ENCODE measurements at regions of chr3 and their contacts with region 1.

Region 1: GRCh38 chr3:34683851-34684250 is 885.4 kb downstream of the PDCD6IP start:
- DNase-seq: peak; percentile 70
- ATAC-seq: no peak
- H3K4me3 Mint-ChIP-seq: no peak overlapping the region
- H3K27ac Mint-ChIP-seq: no peak overlapping the region
- H3K4me1 Mint-ChIP-seq: no peaks in the 10 kb centered on the region
- H3K27me3 Mint-ChIP-seq: no peaks in the 10 kb centered on the region

Region 2: GRCh38 chr3:34106879-34107278 is 577.0 kb before region 1 on chr3:
- CTCF ChIA-PET with region 1: interaction called, 4 read pairs
- POLR2A ChIA-PET with region 1: no interaction called
- intact Hi-C with region 1: loop called in 1 of 2 experiments (anchors 5 kb)
- DNase-seq: peak; percentile 43
- ATAC-seq: peak; percentile 64
- H3K4me3 Mint-ChIP-seq: no peak overlapping the region
- H3K27ac Mint-ChIP-seq: no peak overlapping the region
- H3K4me1 Mint-ChIP-seq: no peaks in the 10 kb centered on the region
- H3K27me3 Mint-ChIP-seq: peaks cover 5% of the 10 kb centered on the region

Region 3: GRCh38 chr3:34260271-34261006 is 423.4 kb before region 1 on chr3:
- CTCF ChIA-PET with region 1: interaction called, 12 read pairs
- POLR2A ChIA-PET with region 1: no interaction called
- intact Hi-C with region 1: loop called in 1 of 2 experiments (anchors 1 kb)
- DNase-seq: peak; percentile 73
- ATAC-seq: no peak
- H3K4me3 Mint-ChIP-seq: no peak overlapping the region
- H3K27ac Mint-ChIP-seq: no peak overlapping the region
- H3K4me1 Mint-ChIP-seq: peaks cover 17% of the 10 kb centered on the region
- H3K27me3 Mint-ChIP-seq: peaks cover 8% of the 10 kb centered on the region